ENCODE measurements at regions of chr2 and their contacts with region 1.

Region 1: GRCh38 chr2:102122110-102122509 is 20.4 kb upstream of the IL1R1 start:
- DNase-seq: no peak

Region 2: DNA sequence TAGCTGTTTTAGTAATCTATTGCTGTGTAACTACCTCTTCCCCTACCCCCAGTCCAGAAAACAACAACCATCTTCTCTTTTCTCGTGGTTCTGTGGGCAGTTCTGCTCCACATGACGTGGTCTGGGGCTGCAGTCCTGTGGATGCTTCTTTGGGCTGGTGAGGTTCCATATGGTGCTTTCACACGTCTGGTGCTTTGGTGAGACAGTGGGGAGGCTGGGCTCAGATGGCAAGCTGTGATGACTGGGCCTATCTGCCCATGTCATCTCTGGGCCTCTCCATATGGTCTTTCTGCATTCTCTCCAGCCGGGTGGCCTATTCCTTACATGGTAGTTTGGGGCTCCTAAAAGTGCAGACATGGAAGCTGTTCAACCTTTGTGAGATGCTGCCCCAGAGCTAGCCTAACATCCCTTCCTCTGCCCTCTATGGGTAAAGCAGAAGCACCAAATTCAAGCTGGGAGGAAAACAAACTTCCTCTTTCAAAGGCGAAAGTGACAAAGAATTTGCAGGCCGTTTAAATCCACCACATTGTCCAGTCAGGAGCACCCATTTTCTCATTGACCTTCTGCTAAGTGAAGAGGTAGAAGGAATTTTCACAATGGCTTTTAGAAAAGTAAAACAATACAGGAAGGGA is 47.8 kb before region 1 on chr2:
- intact Hi-C with region 1: loop called in 1 of 2 experiments (anchors 2 kb)
- DNase-seq: no peak

Region 3: GRCh38 chr2:102084651-102085050 is 37.5 kb before region 1 on chr2:
- intact Hi-C with region 1: no loop called
- DNase-seq: no peak